Ascending aorta (tissue), 2 donors: ENCODE measurements at regions of chr3 and their contacts with region 1.

Region 1: DNA sequence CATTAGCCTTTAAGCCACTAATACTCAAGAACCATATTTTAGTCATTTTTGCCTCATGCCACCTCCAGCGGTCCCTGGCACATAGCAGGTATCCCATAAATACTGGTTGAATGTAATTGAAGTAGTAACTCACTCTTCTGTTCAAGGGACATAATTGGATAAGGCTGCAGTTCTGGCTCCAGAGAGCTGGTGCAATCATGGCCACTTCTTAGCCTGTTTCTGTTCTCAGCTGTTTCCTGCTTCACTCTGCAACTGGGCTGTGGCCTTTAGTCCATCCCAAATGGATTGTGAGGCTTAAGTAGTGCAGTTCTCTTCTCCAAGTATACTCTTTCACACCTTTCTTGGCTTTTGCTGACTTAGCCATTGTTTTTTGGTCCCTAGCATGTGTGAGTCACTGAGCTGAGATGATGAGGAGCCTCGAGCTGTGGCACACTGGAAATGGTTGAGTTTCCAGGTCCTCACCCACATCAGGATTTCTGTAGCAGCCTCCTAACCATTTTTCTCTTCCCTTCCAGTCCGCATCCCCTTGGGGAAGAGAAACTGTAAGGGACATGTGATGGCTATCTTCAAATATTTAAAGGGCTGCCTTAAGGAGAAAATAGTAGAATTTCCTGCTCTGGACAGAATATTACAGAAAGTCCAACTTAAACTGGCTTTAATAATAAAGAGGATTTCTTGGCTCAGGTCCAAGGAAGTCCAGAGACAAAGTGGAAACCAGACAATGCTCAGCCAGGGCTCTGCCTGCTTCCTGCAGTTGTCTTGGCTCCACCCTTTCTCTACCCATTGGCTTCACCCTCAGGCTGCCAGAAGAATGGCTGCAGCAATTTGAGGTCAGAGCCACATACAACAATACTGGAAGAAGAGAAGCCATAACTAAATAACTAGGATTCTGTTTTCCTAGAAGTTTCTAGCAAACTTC is 305.4 kb upstream of the ROPN1 start:
- DNase-seq: no peak
- H3K4me3 ChIP-seq: no peak overlapping the region
- H3K27ac ChIP-seq: peak overlapping the region; percentile 7 to 21
- H3K4me1 ChIP-seq: peaks cover 0 to 25% of the 10 kb centered on the region in 2 donors
- H3K27me3 ChIP-seq: no peaks in the 10 kb centered on the region
- CTCF ChIP-seq: no peak

Region 2: GRCh38 chr3:124315215-124316033 is 18.1 kb after region 1 on chr3:
- intact Hi-C with region 1: loop called (anchors 2 kb)
- DNase-seq: peak in 1 of 2 donors; percentile 81
- H3K4me3 ChIP-seq: no peak overlapping the region
- H3K27ac ChIP-seq: peak overlapping the region; percentile 12 to 28
- H3K4me1 ChIP-seq: peaks cover 0 to 24% of the 10 kb centered on the region in 2 donors
- H3K27me3 ChIP-seq: no peaks in the 10 kb centered on the region
- CTCF ChIP-seq: no peak